ENCODE measurements at regions of chr3 and their contacts with region 1.

Region 1: GRCh38 chr3:141738022-141738890 is at the start of gene RNF7:
- DNase-seq: peak; percentile 97
- ATAC-seq: peak; percentile 94
- H3K4me3 Mint-ChIP-seq: peak within 1 kb of the TSS; percentile 98
- H3K27ac Mint-ChIP-seq: peak within 1 kb of the TSS; percentile 98
- H3K4me1 Mint-ChIP-seq: peaks cover 34% of the 10 kb centered on the region
- H3K27me3 Mint-ChIP-seq: peaks cover 5% of the 10 kb centered on the region
- total RNA-seq, gene RNF7: 58.5 to 61.2 TPM

Region 2: GRCh38 chr3:141796081-141796888 is 58.0 kb after region 1 on chr3:
- CTCF ChIA-PET with region 1: interaction called, 19 read pairs
- POLR2A ChIA-PET with region 1: interaction called, 21 read pairs
- DNase-seq: peak; percentile 86
- ATAC-seq: peak; percentile 85
- H3K4me3 Mint-ChIP-seq: peak overlapping the region; percentile 89
- H3K27ac Mint-ChIP-seq: peak overlapping the region; percentile 98
- H3K4me1 Mint-ChIP-seq: peaks cover 52% of the 10 kb centered on the region
- H3K27me3 Mint-ChIP-seq: no peaks in the 10 kb centered on the region

Region 3: GRCh38 chr3:141913150-141913811 is 175.0 kb after region 1 on chr3:
- CTCF ChIA-PET with region 1: interaction called, 29 read pairs
- POLR2A ChIA-PET with region 1: interaction called, 5 read pairs
- DNase-seq: peak; percentile 65
- ATAC-seq: peak; percentile 82
- H3K4me3 Mint-ChIP-seq: no peak overlapping the region
- H3K27ac Mint-ChIP-seq: no peak overlapping the region
- H3K4me1 Mint-ChIP-seq: no peaks in the 10 kb centered on the region
- H3K27me3 Mint-ChIP-seq: no peaks in the 10 kb centered on the region